ENCODE measurements at regions of chr5 and their contacts with region 1.

Region 1: GRCh38 chr5:134527146-134527960 is 1.9 kb downstream of the JADE2 start:
- DNase-seq: peak; percentile 61
- H3K4me3 Mint-ChIP-seq: peak overlapping the region; percentile 97
- H3K27ac Mint-ChIP-seq: peak overlapping the region; percentile 94
- H3K4me1 Mint-ChIP-seq: peaks cover 25% of the 10 kb centered on the region
- H3K27me3 Mint-ChIP-seq: no peaks in the 10 kb centered on the region

Region 2: DNA sequence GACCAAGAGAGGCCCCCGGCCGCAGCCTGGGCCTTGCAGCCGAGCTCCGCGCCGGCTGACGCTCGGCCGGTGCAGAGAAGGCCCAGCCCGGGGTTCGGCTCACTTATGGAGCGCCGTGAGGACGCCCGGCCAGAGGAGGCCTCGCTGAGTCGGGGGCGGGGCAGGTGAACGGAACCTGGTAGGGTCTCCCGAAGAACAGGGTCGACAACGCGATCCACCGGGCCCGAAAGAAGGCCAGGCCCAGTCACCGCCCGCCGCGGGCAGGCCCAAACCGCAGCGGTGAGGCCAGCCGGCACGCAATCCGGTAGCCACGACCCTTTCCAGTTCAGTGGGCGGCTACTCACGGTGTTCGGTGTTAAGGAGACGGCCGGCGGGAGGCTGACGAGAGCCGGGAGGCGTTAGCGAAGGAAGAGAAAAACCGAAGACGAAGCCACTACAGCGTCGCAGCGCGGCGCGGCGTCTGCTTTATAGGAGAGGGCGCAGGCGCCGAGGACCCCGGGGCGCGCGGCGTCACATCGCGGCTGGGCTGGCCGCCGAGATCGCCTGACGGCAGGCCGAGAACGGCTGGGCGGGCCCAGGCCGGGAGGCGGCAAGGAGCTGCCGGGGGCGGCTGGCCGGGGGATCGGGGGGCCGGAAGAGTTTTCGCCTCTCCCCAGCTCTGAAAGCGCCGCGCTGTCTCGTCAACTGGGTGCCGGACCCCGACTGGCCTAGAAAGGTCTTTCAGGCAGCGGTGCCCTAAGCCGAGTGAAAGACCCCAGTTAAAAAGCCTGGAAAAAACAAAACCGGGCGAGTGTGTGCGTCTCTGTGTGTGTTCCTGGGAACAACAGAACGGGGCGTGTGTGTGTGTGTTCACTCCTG is 350.6 kb before region 1 on chr5 and contains the start of gene SKP1:
- intact Hi-C with region 1: loop called (anchors 10 kb)
- DNase-seq: peak; percentile 85
- H3K4me3 Mint-ChIP-seq: peak within 1 kb of the TSS; percentile 97
- H3K27ac Mint-ChIP-seq: peak within 1 kb of the TSS; percentile 98
- H3K4me1 Mint-ChIP-seq: peaks cover 23% of the 10 kb centered on the region
- H3K27me3 Mint-ChIP-seq: peaks cover 8% of the 10 kb centered on the region
- total RNA-seq, gene SKP1: 254 and 257 TPM in 2 replicates

Region 3: GRCh38 chr5:134411546-134412266 is 115.6 kb before region 1 on chr5 and contains the start of gene CDKN2AIPNL:
- intact Hi-C with region 1: loop called (anchors 1 kb)
- DNase-seq: peak; percentile 86
- H3K4me3 Mint-ChIP-seq: peak within 1 kb of the TSS; percentile 92
- H3K27ac Mint-ChIP-seq: peak within 1 kb of the TSS; percentile 80
- H3K4me1 Mint-ChIP-seq: peaks cover 25% of the 10 kb centered on the region
- H3K27me3 Mint-ChIP-seq: no peaks in the 10 kb centered on the region
- total RNA-seq, gene CDKN2AIPNL: 34.5 and 37.8 TPM in 2 replicates

Region 4: DNA sequence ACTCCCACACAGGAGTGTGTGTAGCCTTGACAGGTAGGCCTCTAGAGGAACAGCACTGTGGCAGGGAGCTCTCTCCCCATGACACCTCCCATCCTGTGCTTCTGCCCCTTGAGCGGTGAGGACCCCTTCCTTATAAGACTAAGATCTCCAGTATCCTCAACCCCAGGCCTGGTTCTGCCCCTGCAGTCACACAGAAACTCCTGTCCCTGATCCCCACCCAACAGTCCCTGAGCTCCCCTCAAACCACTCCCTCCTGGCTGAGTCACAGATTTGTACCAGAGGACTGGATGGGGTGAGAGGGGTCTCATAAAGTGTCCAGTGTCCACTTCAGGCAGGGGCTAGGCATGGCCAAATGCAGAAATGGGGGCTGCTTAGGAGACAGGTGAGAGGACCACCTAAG is 67.9 kb before region 1 on chr5:
- intact Hi-C with region 1: no loop called
- DNase-seq: no peak
- H3K4me3 Mint-ChIP-seq: no peak overlapping the region
- H3K27ac Mint-ChIP-seq: no peak overlapping the region
- H3K4me1 Mint-ChIP-seq: peaks cover 3% of the 10 kb centered on the region
- H3K27me3 Mint-ChIP-seq: peaks cover 7% of the 10 kb centered on the region

Region 5: GRCh38 chr5:134503088-134503946 is 24.0 kb before region 1 on chr5:
- intact Hi-C with region 1: loop called (anchors 1 kb)
- DNase-seq: peak; percentile 67
- H3K4me3 Mint-ChIP-seq: peak overlapping the region; percentile 64
- H3K27ac Mint-ChIP-seq: peak overlapping the region; percentile 99
- H3K4me1 Mint-ChIP-seq: peaks cover 40% of the 10 kb centered on the region
- H3K27me3 Mint-ChIP-seq: no peaks in the 10 kb centered on the region

Region 6: GRCh38 chr5:134555890-134556311 is 28.5 kb after region 1 on chr5:
- intact Hi-C with region 1: loop called (anchors 2 kb)
- DNase-seq: peak; percentile 61
- H3K4me3 Mint-ChIP-seq: peak overlapping the region; percentile 52
- H3K27ac Mint-ChIP-seq: peak overlapping the region; percentile 95
- H3K4me1 Mint-ChIP-seq: peaks cover 28% of the 10 kb centered on the region
- H3K27me3 Mint-ChIP-seq: no peaks in the 10 kb centered on the region

Region 7: GRCh38 chr5:134738133-134738962 is 211.0 kb after region 1 on chr5 and contains the start of gene CAMLG:
- intact Hi-C with region 1: loop called (anchors 10 kb)
- DNase-seq: peak; percentile 97
- H3K4me3 Mint-ChIP-seq: peak within 1 kb of the TSS; percentile 91
- H3K27ac Mint-ChIP-seq: peak within 1 kb of the TSS; percentile 87
- H3K4me1 Mint-ChIP-seq: peaks cover 16% of the 10 kb centered on the region
- H3K27me3 Mint-ChIP-seq: no peaks in the 10 kb centered on the region
- total RNA-seq, gene CAMLG: 28.1 and 29.1 TPM in 2 replicates

Measured in activated T-helper 2 cell treated with anti-CD3 and anti-CD28 coated beads, Interferon-gamma antibody, Interleukin-2, Interleukin-4, amounts not matched to agents 10 μg/mL and 5 μg/mL and 100 μg/mL, durations not matched to agents 14 hours and 24 hours and 36 hours (primary cell).